OCI-LY7 (cell line): ENCODE measurements at regions of chr16 and their contacts with region 1.

Region 1: DNA sequence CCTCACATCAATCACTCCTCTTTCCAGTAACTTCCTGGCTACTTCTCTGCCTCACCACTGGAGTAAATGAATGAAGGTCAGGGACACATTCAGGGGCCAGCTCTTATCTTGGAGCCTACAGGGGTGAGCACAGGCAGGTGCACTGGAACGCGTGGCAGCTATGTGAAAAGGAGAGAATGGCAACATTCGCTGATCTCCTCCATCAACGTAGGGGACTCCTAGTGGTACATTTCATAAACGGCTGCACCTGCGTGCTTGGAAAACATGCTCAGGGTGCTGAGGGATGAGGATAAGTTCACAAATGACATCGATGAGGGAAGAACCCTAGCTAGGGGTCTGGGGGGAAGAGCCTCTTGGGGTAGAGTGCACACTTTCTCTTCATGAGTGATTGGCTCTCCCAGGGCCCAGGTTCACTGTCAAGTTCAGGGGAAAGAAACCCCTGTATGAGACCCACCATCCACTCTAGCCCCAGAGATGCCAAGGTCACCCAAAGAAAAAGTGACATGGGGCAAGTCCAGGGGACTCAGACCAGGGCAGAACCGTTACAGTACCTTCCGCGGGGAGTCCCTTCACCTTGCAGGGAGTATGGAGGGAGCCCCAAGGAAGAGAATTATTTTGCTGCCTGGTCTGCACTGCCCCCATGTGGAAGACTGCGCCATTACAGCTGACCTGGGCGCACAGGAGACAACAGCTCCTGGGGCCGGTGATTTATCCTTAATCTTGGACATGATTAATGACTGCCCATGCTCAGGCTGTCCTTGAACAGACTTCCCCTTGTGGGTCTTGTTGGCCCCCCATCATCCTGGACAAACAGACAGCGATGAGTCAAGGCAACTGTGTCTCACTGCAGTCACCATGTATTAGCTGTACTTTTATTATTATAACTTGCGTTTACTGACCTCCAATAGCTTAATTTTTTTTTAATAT is 30.1 kb downstream of the VAC14 start:
- DNase-seq: peak; percentile 43
- H3K4me3 ChIP-seq: no peak overlapping the region
- H3K27ac ChIP-seq: no peak overlapping the region
- H3K4me1 ChIP-seq: no peaks in the 10 kb centered on the region
- CTCF ChIP-seq: peak; percentile 86

Region 2: GRCh38 chr16:70679666-70680494 is 91.0 kb before region 1 on chr16:
- CTCF ChIA-PET with region 1: no interaction called
- POLR2A ChIA-PET with region 1: interaction called, 3 read pairs
- intact Hi-C with region 1: loop called (anchors 5 kb)
- DNase-seq: no peak
- H3K4me3 ChIP-seq: no peak overlapping the region
- H3K27ac ChIP-seq: no peak overlapping the region
- H3K4me1 ChIP-seq: no peaks in the 10 kb centered on the region
- CTCF ChIP-seq: no peak